ENCODE measurements at regions of chr1 and their contacts with region 1.

Region 1: DNA sequence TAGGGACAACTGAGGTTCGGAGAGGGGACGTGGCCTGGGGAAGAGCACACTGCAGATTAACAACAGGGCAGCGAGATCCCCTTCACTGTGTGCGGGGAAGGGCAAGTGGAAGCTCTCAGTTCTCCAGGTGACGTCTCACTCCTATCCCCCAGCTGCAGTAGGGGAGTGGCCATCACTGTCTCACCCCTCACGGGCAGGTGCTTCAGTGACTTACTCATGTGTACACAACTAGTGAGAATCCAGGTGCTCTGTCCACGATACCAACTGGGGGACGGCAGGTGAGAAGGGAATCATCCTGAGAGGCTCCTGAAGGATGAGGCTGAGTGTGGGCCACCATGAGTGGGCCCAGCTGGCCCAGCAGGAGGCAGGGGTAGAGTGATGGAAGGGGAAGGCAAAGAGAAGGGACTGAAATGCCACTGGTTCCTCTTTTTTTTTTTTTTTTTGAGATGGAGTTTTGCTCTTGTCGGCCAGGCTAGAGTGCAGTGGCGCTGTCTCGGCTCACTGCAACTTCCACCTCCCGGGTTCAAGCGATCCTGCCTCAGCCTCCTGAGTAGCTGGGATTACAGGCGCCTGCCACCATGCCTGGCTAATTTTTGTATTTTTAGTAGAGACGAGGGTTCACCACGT is 25.9 kb downstream of the RHBG start:
- DNase-seq: no peak
- H3K4me3 ChIP-seq: no peak overlapping the region
- H3K27ac ChIP-seq: no peak overlapping the region
- H3K4me1 ChIP-seq: peaks cover 15% of the 10 kb centered on the region; the same call in 1 of the 2 replicates
- H3K27me3 ChIP-seq: no peaks in the 10 kb centered on the region
- CTCF ChIP-seq: no peak

Region 2: GRCh38 chr1:156436142-156437036 is 41.4 kb after region 1 on chr1:
- CTCF ChIA-PET with region 1: no interaction called
- POLR2A ChIA-PET with region 1: interaction called, 14 read pairs
- intact Hi-C with region 1: no loop called
- DNase-seq: no peak
- H3K4me3 ChIP-seq: no peak overlapping the region
- H3K27ac ChIP-seq: no peak overlapping the region
- H3K4me1 ChIP-seq: no peaks in the 10 kb centered on the region
- H3K27me3 ChIP-seq: peaks cover 73% of the 10 kb centered on the region
- CTCF ChIP-seq: no peak

Region 3: GRCh38 chr1:156480411-156481192 is 85.7 kb after region 1 on chr1:
- CTCF ChIA-PET with region 1: no interaction called
- POLR2A ChIA-PET with region 1: no interaction called
- intact Hi-C with region 1: no loop called
- DNase-seq: peak in 1 of 2 experiments; percentile 21
- H3K4me3 ChIP-seq: no peak overlapping the region
- H3K27ac ChIP-seq: no peak overlapping the region
- H3K4me1 ChIP-seq: no peaks in the 10 kb centered on the region
- H3K27me3 ChIP-seq: no peaks in the 10 kb centered on the region
- CTCF ChIP-seq: peak; percentile 46; the same call in 1 of the 2 replicates

Region 4: DNA sequence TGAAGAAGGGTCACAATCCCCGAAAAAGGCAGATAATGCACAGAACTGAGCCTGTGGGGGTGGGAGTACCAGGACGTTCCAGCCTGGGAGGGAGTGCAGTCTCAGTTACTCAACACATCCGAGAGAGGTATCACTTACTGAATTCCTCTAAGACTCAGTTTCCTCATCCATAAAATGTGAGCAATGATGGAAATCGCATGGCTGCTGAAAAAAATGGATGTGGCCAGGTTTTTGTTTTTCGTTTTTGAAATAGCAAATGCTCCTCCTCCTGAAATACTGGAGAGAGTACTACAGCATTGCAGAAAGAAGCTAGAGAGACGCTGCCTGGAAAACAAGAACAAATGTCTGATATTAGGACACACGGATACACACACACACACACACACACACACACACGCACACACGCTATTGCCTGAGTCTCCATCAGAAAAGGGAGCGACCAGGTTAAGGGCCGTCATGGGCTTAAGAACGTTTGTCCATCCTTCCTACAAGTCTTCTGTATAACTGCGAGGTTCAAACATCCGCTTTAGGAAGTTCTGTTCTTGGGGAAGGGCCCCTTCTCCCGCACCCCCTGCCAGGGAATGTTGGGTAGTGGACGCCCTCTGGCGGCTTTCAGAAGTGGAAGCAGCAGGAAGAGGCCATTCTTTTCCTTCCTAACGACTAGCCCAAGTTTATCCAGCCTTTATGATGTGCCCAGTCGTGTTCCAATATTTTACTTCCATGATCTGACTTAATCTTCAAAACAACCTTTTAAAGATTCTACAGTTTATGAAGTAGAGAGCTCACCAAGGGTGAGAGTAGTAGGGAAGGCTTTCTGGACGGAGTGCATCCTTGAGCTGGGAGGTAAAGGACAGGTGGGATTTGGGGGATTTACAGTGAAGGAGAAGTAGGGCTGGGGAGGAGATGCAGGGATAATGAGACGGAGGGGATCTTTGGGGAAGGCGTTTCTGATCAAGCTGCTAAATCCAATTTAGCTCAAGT is 283.0 kb after region 1 on chr1:
- CTCF ChIA-PET with region 1: no interaction called
- POLR2A ChIA-PET with region 1: no interaction called
- intact Hi-C with region 1: no loop called
- DNase-seq: peak in 1 of 2 experiments; percentile 56
- H3K4me3 ChIP-seq: peak overlapping the region; percentile 39; the same call in 1 of the 2 replicates
- H3K27ac ChIP-seq: no peak overlapping the region
- H3K4me1 ChIP-seq: peaks cover 9% of the 10 kb centered on the region
- H3K27me3 ChIP-seq: peaks cover 24% of the 10 kb centered on the region
- CTCF ChIP-seq: peak; percentile 91

Region 5: DNA sequence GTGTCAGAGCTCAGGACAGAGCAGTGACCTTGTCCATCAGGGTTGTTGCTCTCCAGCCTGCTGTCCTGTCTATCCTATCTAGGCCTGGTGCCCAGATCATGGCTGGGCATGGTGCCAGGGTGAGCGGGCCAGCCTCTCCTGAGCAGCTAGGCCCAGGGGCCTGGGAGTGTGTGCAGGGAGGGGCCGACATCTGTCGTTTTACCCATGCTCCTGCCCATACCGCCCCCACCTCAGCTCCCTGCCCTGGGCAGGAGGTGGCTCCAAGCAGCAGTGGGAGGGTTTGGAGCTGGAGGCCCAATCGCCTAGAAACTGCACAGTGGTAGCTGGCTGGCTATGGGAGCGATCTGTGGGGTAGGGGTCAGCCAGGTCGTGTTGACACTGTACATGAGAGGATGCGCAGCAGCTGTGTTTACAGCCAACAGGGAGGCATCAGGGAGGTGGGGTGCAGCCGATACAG is 457.5 kb after region 1 on chr1:
- CTCF ChIA-PET with region 1: no interaction called
- POLR2A ChIA-PET with region 1: no interaction called
- intact Hi-C with region 1: no loop called
- DNase-seq: peak in 1 of 2 experiments; percentile 17
- H3K4me3 ChIP-seq: no peak overlapping the region
- H3K27ac ChIP-seq: no peak overlapping the region
- H3K4me1 ChIP-seq: no peaks in the 10 kb centered on the region
- H3K27me3 ChIP-seq: peaks cover 28% of the 10 kb centered on the region
- CTCF ChIP-seq: no peak

Measured in PC-9 (cell line).